Activated CD4-positive, alpha-beta T cell treated with anti-CD3 and anti-CD28 coated beads for 36 hours (primary cell): ENCODE measurements at regions of chr13 and their contacts with region 1.

Region 1: GRCh38 chr13:46160471-46161066 is 21.4 kb downstream of the LCP1 start:
- DNase-seq: no peak
- ATAC-seq: peak; percentile 52
- H3K4me3 Mint-ChIP-seq: peak overlapping the region; percentile 53
- H3K27ac Mint-ChIP-seq: peak overlapping the region; percentile 91
- H3K4me1 Mint-ChIP-seq: peaks cover 69% of the 10 kb centered on the region
- H3K27me3 Mint-ChIP-seq: no peaks in the 10 kb centered on the region

Region 2: GRCh38 chr13:46126552-46127357 is 33.8 kb before region 1 on chr13:
- CTCF ChIA-PET with region 1: interaction called, 25 read pairs
- POLR2A ChIA-PET with region 1: no interaction called
- intact Hi-C with region 1: no loop called
- DNase-seq: peak; percentile 86
- ATAC-seq: peak; percentile 86
- H3K4me3 Mint-ChIP-seq: no peak overlapping the region
- H3K27ac Mint-ChIP-seq: peak overlapping the region; percentile 76
- H3K4me1 Mint-ChIP-seq: peaks cover 39% of the 10 kb centered on the region
- H3K27me3 Mint-ChIP-seq: no peaks in the 10 kb centered on the region

Region 3: DNA sequence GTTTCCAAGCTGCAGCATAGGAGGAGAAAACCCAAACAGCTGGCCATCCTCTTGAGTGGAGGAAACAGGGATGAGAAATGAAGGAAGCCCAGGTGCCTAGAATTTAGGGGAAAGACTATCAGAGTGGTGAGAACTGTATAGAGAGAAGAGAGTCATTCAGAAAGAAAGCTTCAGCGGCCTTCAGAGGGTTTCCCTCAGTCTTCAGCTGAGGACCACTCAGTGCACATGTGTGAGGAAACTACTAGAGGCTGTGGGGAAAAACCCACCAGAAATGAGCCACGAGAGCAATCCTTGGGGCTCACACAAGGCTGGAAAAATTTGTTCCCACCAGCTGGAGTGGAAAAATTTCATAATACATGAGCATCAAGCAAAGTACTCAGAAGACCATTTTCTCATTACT is 20.5 kb before region 1 on chr13:
- CTCF ChIA-PET with region 1: interaction called, 46 read pairs
- POLR2A ChIA-PET with region 1: interaction called, 3 read pairs
- intact Hi-C with region 1: loop called in 1 of 2 experiments (anchors 2 kb)
- DNase-seq: no peak
- ATAC-seq: peak; percentile 47
- H3K4me3 Mint-ChIP-seq: no peak overlapping the region
- H3K27ac Mint-ChIP-seq: peak overlapping the region; percentile 75
- H3K4me1 Mint-ChIP-seq: peaks cover 32% of the 10 kb centered on the region
- H3K27me3 Mint-ChIP-seq: no peaks in the 10 kb centered on the region

Region 4: GRCh38 chr13:46146899-46147298 is 13.7 kb before region 1 on chr13:
- CTCF ChIA-PET with region 1: interaction called, 54 read pairs
- POLR2A ChIA-PET with region 1: interaction called, 11 read pairs
- intact Hi-C with region 1: loop called in 1 of 2 experiments (anchors 1 kb)
- DNase-seq: no peak
- ATAC-seq: no peak
- H3K4me3 Mint-ChIP-seq: no peak overlapping the region
- H3K27ac Mint-ChIP-seq: peak overlapping the region; percentile 63
- H3K4me1 Mint-ChIP-seq: peaks cover 36% of the 10 kb centered on the region
- H3K27me3 Mint-ChIP-seq: no peaks in the 10 kb centered on the region

Region 5: DNA sequence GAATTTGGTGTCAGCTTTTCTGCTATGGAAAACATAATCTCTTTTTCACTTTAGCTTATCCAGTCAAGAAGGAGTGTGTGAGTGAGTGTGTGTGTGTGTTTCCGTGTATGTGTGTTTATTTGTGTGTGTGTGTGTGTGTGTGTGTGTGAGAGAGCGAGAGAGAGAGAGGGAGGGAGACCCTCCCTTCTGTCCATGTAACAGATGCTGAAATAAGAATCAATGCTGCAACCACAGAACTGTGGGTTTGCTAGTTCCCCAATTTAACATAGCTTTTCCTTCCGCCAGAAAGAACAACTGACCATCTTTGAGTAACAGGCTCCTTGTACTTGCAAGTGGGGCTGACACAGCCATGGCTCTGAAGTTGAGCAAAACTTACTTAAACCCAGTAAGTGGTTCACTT is 16.2 kb after region 1 on chr13:
- CTCF ChIA-PET with region 1: interaction called, 69 read pairs
- POLR2A ChIA-PET with region 1: interaction called, 8 read pairs
- intact Hi-C with region 1: no loop called
- DNase-seq: no peak
- ATAC-seq: no peak
- H3K4me3 Mint-ChIP-seq: peak overlapping the region; percentile 97
- H3K27ac Mint-ChIP-seq: peak overlapping the region; percentile 92
- H3K4me1 Mint-ChIP-seq: peaks cover 65% of the 10 kb centered on the region
- H3K27me3 Mint-ChIP-seq: no peaks in the 10 kb centered on the region

Region 6: GRCh38 chr13:46211483-46212351 is 51.1 kb after region 1 on chr13 and contains the start of gene LRRC63:
- CTCF ChIA-PET with region 1: interaction called, 11 read pairs
- POLR2A ChIA-PET with region 1: interaction called, 3 read pairs
- intact Hi-C with region 1: loop called in 1 of 2 experiments (anchors 5 kb)
- DNase-seq: peak; percentile 90
- ATAC-seq: peak; percentile 96
- H3K4me3 Mint-ChIP-seq: peak within 1 kb of the TSS; percentile 76
- H3K27ac Mint-ChIP-seq: peak within 1 kb of the TSS; percentile 88
- H3K4me1 Mint-ChIP-seq: peaks cover 23% of the 10 kb centered on the region
- H3K27me3 Mint-ChIP-seq: no peaks in the 10 kb centered on the region
- total RNA-seq, gene LRRC63: 0.50 to 0.67 TPM

Region 7: GRCh38 chr13:46295491-46296114 is 135.0 kb after region 1 on chr13:
- CTCF ChIA-PET with region 1: interaction called, 13 read pairs
- POLR2A ChIA-PET with region 1: interaction called, 7 read pairs
- intact Hi-C with region 1: no loop called
- DNase-seq: peak; percentile 75
- ATAC-seq: peak; percentile 88
- H3K4me3 Mint-ChIP-seq: peak overlapping the region; percentile 44
- H3K27ac Mint-ChIP-seq: peak overlapping the region; percentile 95
- H3K4me1 Mint-ChIP-seq: peaks cover 60% of the 10 kb centered on the region
- H3K27me3 Mint-ChIP-seq: no peaks in the 10 kb centered on the region